ENCODE measurements at regions of chr7 and their contacts with region 1.

Region 1: DNA sequence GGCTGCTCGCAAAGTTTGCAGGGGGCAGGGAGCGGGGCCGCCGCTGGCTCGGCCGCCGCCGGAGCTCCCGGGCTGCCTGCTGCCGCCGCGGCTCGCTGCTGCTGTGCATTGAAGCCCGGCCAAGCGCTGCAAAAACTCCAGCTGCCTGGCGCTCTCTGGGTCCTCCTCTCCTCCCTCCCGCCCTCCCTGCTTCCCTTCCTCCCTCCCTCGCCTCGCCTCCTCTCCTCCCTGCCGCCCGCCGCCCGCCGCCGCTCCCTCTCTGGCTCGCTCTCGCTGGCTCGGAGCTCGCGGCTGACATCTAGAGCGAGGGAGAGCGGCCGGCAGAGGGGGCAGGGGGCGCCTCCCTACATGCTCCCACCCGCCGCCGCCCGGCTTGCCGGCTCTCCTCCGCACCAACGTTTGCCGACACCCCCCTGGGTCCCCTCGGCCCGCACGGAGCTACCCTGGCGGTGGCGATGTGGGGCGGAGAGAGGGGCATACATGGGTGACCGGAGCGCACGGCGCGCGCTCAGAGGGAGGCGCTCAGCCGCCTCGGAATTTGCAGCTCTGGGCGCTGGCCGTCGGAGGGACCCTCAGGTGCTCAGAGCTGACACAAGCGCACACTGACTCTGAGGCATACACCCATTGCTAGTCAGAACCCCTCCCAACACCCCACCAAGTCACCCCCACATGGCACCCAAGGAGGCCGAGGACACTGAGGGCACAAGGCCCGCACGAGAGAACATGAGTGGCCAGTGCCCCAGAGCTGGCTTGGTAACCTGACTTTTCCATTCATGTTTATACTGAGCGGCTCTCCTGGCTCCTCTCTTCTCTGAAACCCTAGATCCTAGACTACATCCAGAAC is 1.2 kb upstream of the PLXNA4 start:
- DNase-seq: peak; percentile 43 to 90
- H3K4me3 ChIP-seq: no peak overlapping the region
- CTCF ChIP-seq: no peak
- POLR2A ChIP-seq: no peak

Region 2: GRCh38 chr7:131945313-131945911 is 632.0 kb before region 1 on chr7:
- intact Hi-C with region 1: loop called (anchors 5 kb)
- DNase-seq: peak in 1 of 2 donors; percentile 88
- H3K4me3 ChIP-seq: no peak overlapping the region
- CTCF ChIP-seq: peak in 1 of 3 donors; percentile 42
- POLR2A ChIP-seq: no peak

Region 3: DNA sequence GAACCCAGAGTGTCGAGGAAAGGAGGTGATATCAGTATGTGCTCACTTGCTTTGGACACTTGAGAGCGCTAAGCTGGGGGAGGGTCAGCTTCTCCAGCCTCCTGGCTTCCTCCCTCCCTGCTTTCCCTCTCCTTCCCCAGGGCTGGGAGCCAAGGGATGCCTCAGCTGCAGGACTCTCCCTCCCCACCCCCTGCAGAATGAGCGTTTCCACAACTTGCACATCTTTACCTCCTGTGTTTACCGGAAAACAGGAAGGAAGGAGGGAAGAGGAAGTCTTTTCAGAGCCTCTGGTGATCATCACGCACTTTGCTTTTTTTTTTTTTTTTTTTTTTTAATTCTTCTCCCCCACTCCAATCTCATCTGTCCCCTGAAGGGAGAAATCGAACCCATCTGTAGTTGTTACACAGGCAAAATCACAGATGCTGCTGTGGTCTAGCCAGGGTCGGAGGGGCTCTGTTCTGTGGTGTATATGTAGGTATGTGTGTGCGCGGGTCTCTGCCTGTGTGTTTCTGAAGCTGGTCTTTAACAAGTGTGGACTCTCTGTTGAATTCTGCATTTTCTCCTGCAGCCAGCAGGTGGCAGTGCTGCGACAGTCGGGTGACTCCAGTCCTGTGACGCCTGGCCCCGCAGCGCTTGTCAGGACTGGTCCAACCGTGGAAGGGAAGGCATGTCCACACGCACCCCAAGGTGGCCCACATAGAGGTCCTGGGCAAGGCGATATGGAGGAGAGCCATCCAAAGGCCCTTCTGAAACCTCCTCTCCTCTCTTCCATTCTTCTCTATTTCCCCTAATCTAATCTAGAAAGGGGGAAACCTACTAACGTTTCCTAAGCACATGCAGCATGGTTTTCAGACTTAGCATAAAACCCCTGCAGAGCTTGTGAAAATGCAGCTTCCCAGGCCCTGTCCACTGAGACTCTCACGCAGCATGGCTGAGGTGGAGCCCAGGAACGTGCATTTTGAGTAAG is 258.8 kb before region 1 on chr7:
- intact Hi-C with region 1: loop called (anchors 5 kb)
- DNase-seq: peak; percentile 74 to 97
- H3K4me3 ChIP-seq: no peak overlapping the region
- CTCF ChIP-seq: peak in 1 of 3 donors; percentile 61
- POLR2A ChIP-seq: no peak

Measured in lower leg skin (tissue), 4 donors.